Activated CD8-positive, alpha-beta T cell treated with anti-CD3 and anti-CD28 coated beads for 36 hours (primary cell): ENCODE measurements at regions of chr9 and their contacts with region 1.

Region 1: DNA sequence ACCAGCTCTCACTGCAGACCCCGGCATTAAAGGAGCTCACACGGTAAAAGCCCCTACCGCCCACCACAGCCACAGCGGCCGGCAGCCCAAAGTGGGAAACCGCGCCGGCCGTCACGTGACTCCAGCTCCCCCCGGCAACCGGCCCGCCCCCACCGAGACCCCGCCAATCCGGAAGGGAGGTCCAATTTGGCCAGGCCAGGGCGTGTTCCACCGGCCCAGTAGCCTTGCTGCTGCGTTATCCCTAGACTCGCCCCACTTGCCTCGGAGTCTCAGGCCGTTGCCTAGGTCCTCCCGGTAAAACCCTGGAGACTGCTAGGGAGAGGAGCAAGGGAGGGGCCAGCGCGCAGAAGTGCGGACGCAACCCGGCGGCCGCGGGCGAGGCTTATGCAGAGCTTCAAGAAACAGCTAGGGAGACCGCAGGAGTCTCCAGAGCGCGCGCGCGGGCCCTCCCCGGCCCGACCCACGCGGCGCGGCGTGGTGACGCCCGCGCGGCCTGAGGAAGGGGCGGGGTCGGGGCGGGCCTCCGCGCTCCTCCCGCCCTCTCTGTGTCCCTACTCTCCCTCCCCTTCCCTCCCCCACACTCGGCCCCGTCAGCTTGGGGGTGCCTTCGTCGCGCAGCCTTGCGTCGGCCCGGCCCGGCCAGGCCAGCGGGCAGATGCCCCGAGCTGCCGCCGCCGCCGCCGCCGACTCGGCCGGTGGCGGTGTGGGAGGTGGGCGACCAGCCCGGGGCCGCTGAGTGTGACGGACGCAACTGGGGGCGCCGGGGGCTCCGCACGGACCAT is at the start of gene RIC1:
- DNase-seq: peak; percentile 94
- ATAC-seq: peak; percentile 83
- H3K4me3 Mint-ChIP-seq: peak within 1 kb of the TSS; percentile 100
- H3K27ac Mint-ChIP-seq: peak within 1 kb of the TSS; percentile 100
- H3K4me1 Mint-ChIP-seq: peaks cover 54% of the 10 kb centered on the region
- H3K27me3 Mint-ChIP-seq: no peaks in the 10 kb centered on the region
- CTCF ChIP-seq: no peak
- total RNA-seq, gene RIC1: 14.4 to 14.6 TPM

Region 2: DNA sequence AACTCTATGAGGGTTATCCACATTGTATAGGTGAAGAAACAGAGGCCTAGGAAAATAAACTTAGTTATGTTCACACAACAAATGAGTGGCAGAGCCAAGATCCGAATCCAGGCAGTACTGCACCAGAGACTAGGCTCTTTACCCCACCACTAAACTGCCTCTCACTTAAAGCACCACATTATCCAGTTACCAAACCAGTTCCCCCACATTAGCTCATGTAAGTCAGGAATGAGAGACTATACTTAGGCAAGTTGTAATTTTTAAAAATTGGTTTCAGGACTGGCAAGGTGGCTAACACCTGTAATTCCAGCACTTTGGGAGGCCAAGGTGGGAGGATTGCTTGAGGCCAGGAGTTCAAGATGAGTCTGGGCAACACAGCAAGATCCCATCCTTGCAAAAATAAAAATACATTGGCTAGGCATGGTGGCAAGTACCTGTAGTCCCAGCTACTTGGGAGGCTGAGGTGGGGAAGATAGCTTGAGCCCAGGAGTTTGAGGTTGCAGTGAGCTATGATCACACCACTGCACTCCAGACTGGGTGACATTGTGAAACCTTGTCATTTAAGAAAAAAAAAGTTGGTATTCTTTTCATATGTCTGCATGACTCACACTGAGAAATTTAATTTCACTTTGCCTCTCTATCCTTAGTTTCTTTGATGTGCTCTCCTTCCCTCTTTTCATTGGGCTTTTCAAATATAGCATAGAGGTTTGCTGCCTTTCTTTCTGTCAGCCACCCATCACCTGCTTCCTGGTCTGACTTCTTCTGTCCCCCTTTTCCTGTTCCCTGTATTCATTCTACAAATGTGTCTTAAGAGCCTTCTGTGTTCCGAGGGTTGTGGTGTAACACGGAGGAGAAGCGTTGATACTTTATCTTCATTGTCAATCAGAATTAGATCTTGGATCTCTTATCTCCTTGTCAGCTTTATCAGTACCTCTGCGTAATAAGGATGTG is 139.5 kb after region 1 on chr9:
- CTCF ChIA-PET with region 1: no interaction called
- POLR2A ChIA-PET with region 1: no interaction called
- intact Hi-C with region 1: loop called (anchors 5 kb)
- DNase-seq: peak; percentile 43
- ATAC-seq: peak; percentile 85
- H3K4me3 Mint-ChIP-seq: peak overlapping the region; percentile 40
- H3K27ac Mint-ChIP-seq: peak overlapping the region; percentile 88
- H3K4me1 Mint-ChIP-seq: peaks cover 39% of the 10 kb centered on the region
- H3K27me3 Mint-ChIP-seq: no peaks in the 10 kb centered on the region
- CTCF ChIP-seq: no peak

Region 3: DNA sequence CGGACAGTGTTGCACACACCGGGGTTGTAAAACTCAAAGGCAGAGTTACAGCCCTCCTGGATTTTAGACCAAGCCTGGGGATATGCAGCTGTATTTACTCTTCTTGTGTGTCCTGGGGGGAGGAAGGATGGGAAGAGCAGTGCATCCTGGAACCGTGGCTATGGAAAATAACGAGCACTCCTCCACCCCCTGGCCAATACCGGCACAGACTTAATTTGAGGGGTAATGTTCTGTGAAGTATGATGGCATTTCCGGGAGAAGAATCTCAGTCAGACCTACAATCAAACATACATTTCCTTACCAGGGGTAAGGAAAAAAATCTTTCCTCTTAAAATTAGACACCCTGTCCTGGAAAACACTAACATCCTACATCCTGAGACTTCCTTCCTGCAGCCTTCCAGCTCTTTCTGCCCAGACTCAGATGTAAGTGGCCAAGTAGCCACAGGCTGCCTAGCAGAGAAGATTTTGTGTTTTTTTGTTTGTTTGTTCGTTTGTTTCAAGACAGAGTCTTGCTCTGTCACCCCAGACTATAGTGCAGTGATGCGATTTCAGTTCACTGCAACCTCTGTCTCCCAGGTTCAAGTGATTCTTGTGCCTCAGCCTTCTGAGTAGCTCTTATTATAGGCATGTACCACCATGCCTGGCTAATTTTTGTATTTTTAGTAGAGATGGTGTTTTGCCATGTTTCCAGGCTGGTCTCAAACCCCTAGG is 215.2 kb after region 1 on chr9:
- CTCF ChIA-PET with region 1: no interaction called
- POLR2A ChIA-PET with region 1: no interaction called
- intact Hi-C with region 1: loop called (anchors 5 kb)
- DNase-seq: peak; percentile 16
- ATAC-seq: no peak
- H3K4me3 Mint-ChIP-seq: peak overlapping the region; percentile 51
- H3K27ac Mint-ChIP-seq: peak overlapping the region; percentile 89
- H3K4me1 Mint-ChIP-seq: peaks cover 65% of the 10 kb centered on the region
- H3K27me3 Mint-ChIP-seq: no peaks in the 10 kb centered on the region
- CTCF ChIP-seq: no peak